ENCODE measurements at regions of chr16 and their contacts with region 1.

Region 1: GRCh38 chr16:30984669-30985400 is at the start of gene HSD3B7:
- DNase-seq: peak; percentile 81
- ATAC-seq: peak; percentile 81
- H3K4me3 ChIP-seq: no peak within 1 kb of the TSS
- H3K4me3 Mint-ChIP-seq: no peak within 1 kb of the TSS
- H3K27ac ChIP-seq: no peak within 1 kb of the TSS
- H3K27ac Mint-ChIP-seq: no peak within 1 kb of the TSS
- H3K4me1 ChIP-seq: peaks cover 3 to 6% of the 10 kb centered on the region in 2 donors
- H3K4me1 Mint-ChIP-seq: no peaks in the 10 kb centered on the region
- H3K27me3 ChIP-seq: no peaks in the 10 kb centered on the region
- H3K27me3 Mint-ChIP-seq: no peaks in the 10 kb centered on the region
- CTCF ChIP-seq: peak; percentile 90
- total RNA-seq, gene HSD3B7: 1.0 and 1.2 TPM in 2 replicates

Region 2: GRCh38 chr16:31094424-31095120 is 109.7 kb after region 1 on chr16 and contains the start of gene VKORC1:
- CTCF ChIA-PET with region 1: interaction called, 12 read pairs
- POLR2A ChIA-PET with region 1: no interaction called
- intact Hi-C with region 1: loop called (anchors 1 kb)
- DNase-seq: peak; percentile 90
- ATAC-seq: peak; percentile 89
- H3K4me3 ChIP-seq: peak within 1 kb of the TSS; percentile 50 to 99 (median 73)
- H3K4me3 Mint-ChIP-seq: peak within 1 kb of the TSS; percentile 98
- H3K27ac ChIP-seq: peak within 1 kb of the TSS; percentile 81 to 85
- H3K27ac Mint-ChIP-seq: peak within 1 kb of the TSS; percentile 96
- H3K4me1 ChIP-seq: peaks cover 14 to 31% of the 10 kb centered on the region in 2 donors
- H3K4me1 Mint-ChIP-seq: peaks cover 29% of the 10 kb centered on the region
- H3K27me3 ChIP-seq: no peaks in the 10 kb centered on the region
- H3K27me3 Mint-ChIP-seq: no peaks in the 10 kb centered on the region
- CTCF ChIP-seq: no peak
- total RNA-seq, gene VKORC1: 36.8 and 45.7 TPM in 2 replicates

Region 3: GRCh38 chr16:31157136-31157535 is 172.3 kb after region 1 on chr16:
- CTCF ChIA-PET with region 1: no interaction called
- POLR2A ChIA-PET with region 1: no interaction called
- intact Hi-C with region 1: loop called (anchors 5 kb)
- DNase-seq: no peak
- ATAC-seq: peak; percentile 53
- H3K4me3 ChIP-seq: no peak overlapping the region
- H3K4me3 Mint-ChIP-seq: no peak overlapping the region
- H3K27ac ChIP-seq: no peak overlapping the region
- H3K27ac Mint-ChIP-seq: no peak overlapping the region
- H3K4me1 ChIP-seq: peaks cover 0 to 6% of the 10 kb centered on the region in 2 donors
- H3K4me1 Mint-ChIP-seq: peaks cover 8% of the 10 kb centered on the region
- H3K27me3 ChIP-seq: peaks cover 0 to 2% (median 0%) of the 10 kb centered on the region in 4 experiments
- H3K27me3 Mint-ChIP-seq: peaks cover 5% of the 10 kb centered on the region
- CTCF ChIP-seq: no peak

Region 4: GRCh38 chr16:31333686-31334649 is 349.1 kb after region 1 on chr16:
- CTCF ChIA-PET with region 1: interaction called, 22 read pairs
- POLR2A ChIA-PET with region 1: no interaction called
- intact Hi-C with region 1: no loop called
- DNase-seq: peak; percentile 68
- ATAC-seq: peak; percentile 85
- H3K4me3 ChIP-seq: no peak overlapping the region
- H3K4me3 Mint-ChIP-seq: no peak overlapping the region
- H3K27ac ChIP-seq: no peak overlapping the region
- H3K27ac Mint-ChIP-seq: no peak overlapping the region
- H3K4me1 ChIP-seq: peaks cover 7 to 19% of the 10 kb centered on the region in 2 donors
- H3K4me1 Mint-ChIP-seq: peaks cover 23% of the 10 kb centered on the region
- H3K27me3 ChIP-seq: peaks cover 0 to 28% (median 4%) of the 10 kb centered on the region in 4 experiments
- H3K27me3 Mint-ChIP-seq: peaks cover 12% of the 10 kb centered on the region
- CTCF ChIP-seq: peak; percentile 64

Region 5: DNA sequence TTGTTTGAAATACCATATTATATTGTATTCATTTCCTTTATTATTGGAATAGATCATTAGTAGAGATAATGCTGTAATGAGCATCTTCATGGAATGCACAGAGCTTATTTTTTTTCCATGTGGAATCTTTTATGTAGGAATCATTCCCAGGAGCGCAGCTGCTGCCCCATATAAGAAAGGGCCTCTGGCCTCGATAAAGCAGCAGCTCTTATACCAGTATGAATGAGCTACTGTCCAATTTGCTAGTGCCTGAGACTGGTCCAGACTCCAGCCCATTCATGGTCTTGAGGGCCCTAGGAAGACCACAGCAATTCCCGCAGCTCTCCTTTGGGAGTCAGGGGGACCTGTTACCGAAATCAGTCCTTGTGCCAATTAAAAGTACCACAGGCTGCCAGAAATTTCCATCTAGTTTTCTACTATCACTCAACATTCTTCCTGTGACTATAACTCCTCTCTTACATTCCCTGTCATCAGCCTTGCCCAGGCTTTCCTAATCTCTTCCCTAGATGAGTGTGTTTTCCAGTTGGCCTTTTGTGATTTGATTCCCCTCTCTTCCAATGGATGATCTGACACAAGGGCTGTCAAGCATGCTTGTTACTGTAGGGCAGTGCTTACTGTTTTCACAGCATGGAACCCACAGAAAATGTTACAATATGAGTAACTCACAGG is 455.8 kb after region 1 on chr16:
- CTCF ChIA-PET with region 1: interaction called, 63 read pairs
- POLR2A ChIA-PET with region 1: no interaction called
- intact Hi-C with region 1: loop called (anchors 1 kb)
- DNase-seq: no peak
- ATAC-seq: no peak
- H3K4me3 ChIP-seq: no peak overlapping the region
- H3K4me3 Mint-ChIP-seq: no peak overlapping the region
- H3K27ac ChIP-seq: no peak overlapping the region
- H3K27ac Mint-ChIP-seq: no peak overlapping the region
- H3K4me1 ChIP-seq: peaks cover 11 to 12% of the 10 kb centered on the region in 2 donors
- H3K4me1 Mint-ChIP-seq: peaks cover 19% of the 10 kb centered on the region
- H3K27me3 ChIP-seq: peaks cover 0 to 6% (median 2%) of the 10 kb centered on the region in 4 experiments
- H3K27me3 Mint-ChIP-seq: peaks cover 3% of the 10 kb centered on the region
- CTCF ChIP-seq: no peak

Region 6: GRCh38 chr16:31868691-31869167 is 883.9 kb after region 1 on chr16:
- CTCF ChIA-PET with region 1: interaction called, 25 read pairs
- POLR2A ChIA-PET with region 1: no interaction called
- intact Hi-C with region 1: no loop called
- DNase-seq: peak; percentile 81
- ATAC-seq: no peak
- H3K4me3 ChIP-seq: peak overlapping the region in 3 of 5 experiments; percentile 18 to 26 (median 22)
- H3K4me3 Mint-ChIP-seq: peak overlapping the region; percentile 69
- H3K27ac ChIP-seq: peak overlapping the region; percentile 87 to 88
- H3K27ac Mint-ChIP-seq: peak overlapping the region; percentile 75
- H3K4me1 ChIP-seq: peaks cover 19 to 27% of the 10 kb centered on the region in 2 donors
- H3K4me1 Mint-ChIP-seq: peaks cover 46% of the 10 kb centered on the region
- H3K27me3 ChIP-seq: no peaks in the 10 kb centered on the region
- H3K27me3 Mint-ChIP-seq: peaks cover 5% of the 10 kb centered on the region
- CTCF ChIP-seq: peak; percentile 90

Measured in B cell (primary cell).